ENCODE measurements at regions of chr15 and their contacts with region 1.

Region 1: DNA sequence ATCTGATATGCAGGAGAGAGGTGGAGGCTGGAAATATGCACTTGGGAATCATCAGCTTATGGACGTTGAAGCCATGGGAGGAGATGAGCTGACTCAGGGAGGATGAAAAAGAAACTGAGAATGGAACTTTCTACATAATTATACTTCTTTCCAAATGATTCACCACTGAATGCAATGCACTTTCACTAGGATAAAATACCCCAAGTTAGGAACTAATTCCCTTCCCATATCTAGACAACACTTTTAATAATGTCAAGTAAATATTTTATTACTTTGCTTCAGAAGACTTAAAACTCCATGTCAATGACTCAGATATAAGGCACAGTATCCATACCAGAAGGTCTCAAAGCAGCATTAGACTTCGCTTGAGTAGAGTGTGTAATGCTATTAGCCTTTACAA is 24.2 kb downstream of the NPTN start:
- DNase-seq: no peak
- H3K4me3 Mint-ChIP-seq: no peak overlapping the region
- H3K27ac Mint-ChIP-seq: no peak overlapping the region
- H3K4me1 Mint-ChIP-seq: peaks cover 46% of the 10 kb centered on the region
- H3K27me3 Mint-ChIP-seq: no peaks in the 10 kb centered on the region

Region 2: DNA sequence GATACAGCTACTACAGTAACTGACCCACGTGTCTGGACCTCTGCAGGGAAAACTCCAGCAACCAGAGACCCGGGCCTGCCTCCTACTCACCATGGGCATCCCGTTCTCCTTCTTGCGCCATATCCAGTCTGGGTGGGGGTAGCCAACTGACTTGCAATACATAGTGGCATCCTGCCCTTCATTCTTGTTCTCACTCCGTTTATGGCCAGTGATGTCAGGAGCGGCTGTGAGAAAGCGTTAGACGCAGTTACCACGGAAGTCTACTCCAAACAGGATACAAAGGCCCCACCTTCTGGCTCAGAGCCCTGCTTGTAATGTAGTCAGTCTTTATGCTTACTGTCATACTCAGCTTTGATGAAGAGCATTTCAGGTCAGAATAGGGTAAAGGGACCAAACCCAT is 35.4 kb before region 1 on chr15:
- CTCF ChIA-PET with region 1: no interaction called
- POLR2A ChIA-PET with region 1: no interaction called
- intact Hi-C with region 1: loop called (anchors 5 kb)
- DNase-seq: no peak
- H3K4me3 Mint-ChIP-seq: no peak overlapping the region
- H3K27ac Mint-ChIP-seq: no peak overlapping the region
- H3K4me1 Mint-ChIP-seq: peaks cover 19% of the 10 kb centered on the region
- H3K27me3 Mint-ChIP-seq: no peaks in the 10 kb centered on the region

Region 3: DNA sequence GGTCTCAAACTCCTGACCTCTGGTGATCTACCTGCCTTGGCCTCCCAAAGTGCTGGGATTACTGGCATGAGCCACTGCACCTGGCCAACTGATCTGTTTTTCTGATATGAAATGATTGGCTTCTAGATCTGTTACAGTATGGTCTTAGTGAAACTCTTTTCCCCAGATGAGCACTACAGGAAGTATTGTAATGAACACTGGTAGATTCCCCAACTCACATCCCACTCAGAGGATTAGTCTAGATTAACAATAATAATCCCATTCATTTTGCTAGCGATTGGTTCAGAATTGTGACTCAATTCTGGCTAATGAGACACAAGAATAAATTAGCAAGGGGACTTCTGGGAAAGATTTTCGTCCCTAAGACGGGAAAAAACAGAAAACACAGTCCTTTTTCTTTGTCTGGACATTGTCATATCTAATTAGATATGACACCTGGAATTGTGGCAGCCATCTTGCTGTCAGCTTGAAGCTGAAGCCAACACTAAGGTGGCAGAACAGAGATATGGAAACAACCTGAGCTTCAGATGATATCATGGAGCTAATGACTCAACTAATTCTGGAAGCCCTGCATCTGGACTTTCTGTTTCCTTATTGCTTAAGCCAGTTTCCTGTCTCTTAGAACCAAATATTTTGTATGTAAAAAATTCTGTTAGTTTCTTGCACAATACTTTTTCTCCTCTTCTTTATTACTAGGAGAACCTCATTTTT is 41.6 kb after region 1 on chr15:
- CTCF ChIA-PET with region 1: no interaction called
- POLR2A ChIA-PET with region 1: no interaction called
- intact Hi-C with region 1: loop called (anchors 2 kb)
- DNase-seq: peak; percentile 37
- H3K4me3 Mint-ChIP-seq: no peak overlapping the region
- H3K27ac Mint-ChIP-seq: peak overlapping the region; percentile 34
- H3K4me1 Mint-ChIP-seq: peaks cover 17% of the 10 kb centered on the region
- H3K27me3 Mint-ChIP-seq: peaks cover 22% of the 10 kb centered on the region

Region 4: DNA sequence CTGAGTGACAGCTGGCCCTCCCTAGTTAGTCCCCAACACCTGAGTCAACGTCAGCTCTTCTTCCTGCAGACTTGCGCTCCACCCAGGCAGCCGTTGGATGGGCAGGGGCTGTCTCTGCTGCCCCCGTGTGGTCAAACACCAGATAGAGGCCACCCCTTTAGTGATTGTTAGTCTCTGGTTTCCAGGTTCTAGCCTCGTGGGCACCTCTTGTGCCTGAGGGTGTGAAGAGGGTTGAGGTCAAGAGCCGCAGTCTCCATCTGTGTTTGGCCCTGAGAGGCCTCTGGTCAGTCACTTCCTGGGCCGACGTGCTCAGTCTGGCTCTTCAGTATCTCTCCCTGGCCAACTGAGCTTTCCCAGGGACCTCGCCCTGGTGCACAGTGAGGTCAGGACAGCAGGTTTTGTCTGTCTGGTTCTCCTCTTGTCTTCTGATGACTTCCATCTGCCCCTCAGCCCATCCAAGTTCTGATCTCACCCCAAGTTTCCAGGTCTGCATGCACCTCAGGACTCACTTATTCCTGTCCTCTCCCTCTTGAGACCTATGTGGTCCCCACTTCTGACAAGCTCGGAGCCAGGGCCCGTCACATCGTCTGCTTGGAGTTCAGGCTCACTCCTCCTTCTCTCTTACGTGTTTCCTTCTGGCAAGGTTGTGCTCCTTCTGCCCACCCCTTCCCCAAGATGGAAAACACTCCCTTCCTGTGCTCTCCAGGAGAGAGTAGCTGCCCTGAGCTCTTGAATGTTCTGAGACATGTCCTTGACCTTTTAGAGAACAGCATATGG is 96.1 kb after region 1 on chr15:
- CTCF ChIA-PET with region 1: interaction called, 10 read pairs
- POLR2A ChIA-PET with region 1: no interaction called
- intact Hi-C with region 1: no loop called
- DNase-seq: peak; percentile 77
- H3K4me3 Mint-ChIP-seq: no peak overlapping the region
- H3K27ac Mint-ChIP-seq: no peak overlapping the region
- H3K4me1 Mint-ChIP-seq: peaks cover 1% of the 10 kb centered on the region
- H3K27me3 Mint-ChIP-seq: peaks cover 4% of the 10 kb centered on the region

Measured in activated CD4-positive, alpha-beta memory T cell treated with anti-CD3 and anti-CD28 coated beads for 36 hours (primary cell).